ENCODE measurements at regions of chr11 and their contacts with region 1.

Region 1: GRCh38 chr11:125433454-125434121 is 62.5 kb downstream of the FEZ1 start:
- DNase-seq: no peak
- H3K4me3 ChIP-seq: no peak overlapping the region
- H3K27ac ChIP-seq: no peak overlapping the region
- H3K4me1 ChIP-seq: no peaks in the 10 kb centered on the region
- H3K27me3 ChIP-seq: no peaks in the 10 kb centered on the region
- CTCF ChIP-seq: peak in 3 of 4 experiments; percentile 15 to 36 (median 32)
- POLR2A ChIP-seq: no peak

Region 2: DNA sequence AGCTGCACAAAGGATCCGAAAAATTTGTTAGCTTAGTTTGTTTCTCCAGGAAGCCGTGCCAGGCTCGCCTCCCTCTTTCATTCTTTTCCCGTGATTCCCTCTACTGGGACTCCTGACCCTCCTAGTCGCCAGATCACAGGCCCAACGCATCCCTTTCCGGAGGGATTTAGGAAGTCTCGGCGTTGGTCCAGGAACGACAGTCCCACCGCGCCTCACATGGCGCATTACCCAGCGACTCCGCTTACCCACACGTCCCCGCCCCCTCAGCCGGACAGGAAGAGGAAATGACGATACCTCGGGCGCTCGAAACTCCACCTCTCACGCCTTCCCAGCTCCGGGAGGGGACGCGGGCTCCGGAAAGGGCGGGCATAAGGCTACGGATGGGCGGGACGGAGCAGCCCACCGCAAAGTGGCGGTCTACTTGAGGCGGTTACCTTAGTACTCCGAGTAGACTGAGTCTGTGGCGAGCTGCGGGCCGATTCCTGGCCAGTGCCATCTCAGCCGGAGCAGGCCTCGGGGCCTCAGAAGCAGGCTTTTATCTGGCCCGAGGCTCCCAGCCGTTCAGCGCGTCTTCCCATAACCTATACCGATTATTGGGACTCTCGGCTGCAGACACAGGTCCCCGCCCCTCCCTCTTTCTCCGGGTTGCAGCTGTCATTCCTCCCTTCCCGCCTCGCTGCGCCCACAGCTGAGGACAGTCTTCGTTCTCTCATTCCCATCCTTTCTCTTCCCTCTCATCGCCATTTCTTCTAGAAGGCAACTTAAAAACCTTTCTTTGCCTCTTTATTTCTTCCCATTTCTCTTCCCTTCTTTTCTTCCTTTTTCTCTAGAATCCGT is 479.6 kb before region 1 on chr11 and contains the start of gene CCDC15:
- intact Hi-C with region 1: loop called (anchors 10 kb)
- DNase-seq: peak; percentile 96
- H3K4me3 ChIP-seq: peak within 1 kb of the TSS; percentile 47 to 54
- H3K27ac ChIP-seq: peak within 1 kb of the TSS; percentile 80
- H3K4me1 ChIP-seq: no peaks in the 10 kb centered on the region
- H3K27me3 ChIP-seq: no peaks in the 10 kb centered on the region
- CTCF ChIP-seq: peak in 1 of 4 experiments; percentile 17
- POLR2A ChIP-seq: peak; percentile 77
- total RNA-seq, gene CCDC15: 3.6 to 7.1 TPM

Measured in prostate gland (tissue), 2 donors.